Psoas muscle (tissue), 8 donors: ENCODE measurements at regions of chr4 and their contacts with region 1.

Region 1: GRCh38 chr4:139454111-139455045 is at the start of gene RAB33B:
- DNase-seq: no peak
- ATAC-seq: peak; percentile 5 to 26 (median 12)
- H3K4me3 ChIP-seq: peak within 1 kb of the TSS; percentile 87
- H3K27ac ChIP-seq: peak within 1 kb of the TSS; percentile 94
- H3K4me1 ChIP-seq: peaks cover 23% of the 10 kb centered on the region
- H3K27me3 ChIP-seq: no peaks in the 10 kb centered on the region
- CTCF ChIP-seq: no peak
- total RNA-seq, gene RAB33B: 3.4 to 4.0 (median 3.6) TPM

Region 2: DNA sequence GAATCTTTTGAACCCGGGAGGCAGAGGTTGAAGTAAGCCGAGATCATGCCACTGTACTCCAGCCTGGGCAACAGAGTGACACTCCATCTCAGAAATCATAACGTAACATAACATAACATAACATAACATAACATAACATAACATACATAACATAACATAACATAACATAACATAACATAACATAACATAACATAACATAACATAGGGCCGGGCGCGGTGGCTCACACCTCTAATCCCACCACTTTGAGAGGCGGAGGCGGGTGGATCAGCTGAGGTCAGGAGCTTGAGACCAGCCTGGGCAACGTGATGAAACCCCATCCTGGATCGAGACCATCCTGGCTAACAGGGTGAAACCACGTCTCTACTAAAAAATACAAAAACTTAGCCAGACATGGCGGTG is 362.1 kb before region 1 on chr4:
- intact Hi-C with region 1: no loop called
- DNase-seq: no peak
- ATAC-seq: no peak
- H3K4me3 ChIP-seq: no peak overlapping the region
- H3K27ac ChIP-seq: no peak overlapping the region
- H3K4me1 ChIP-seq: no peaks in the 10 kb centered on the region
- H3K27me3 ChIP-seq: no peaks in the 10 kb centered on the region
- CTCF ChIP-seq: no peak

Region 3: GRCh38 chr4:139509727-139510410 is 55.5 kb after region 1 on chr4:
- intact Hi-C with region 1: loop called in 1 of 2 experiments (anchors 5 kb)
- DNase-seq: no peak
- ATAC-seq: peak; percentile 54 to 69 (median 64)
- H3K4me3 ChIP-seq: no peak overlapping the region
- H3K27ac ChIP-seq: peak overlapping the region; percentile 48
- H3K4me1 ChIP-seq: peaks cover 48% of the 10 kb centered on the region
- H3K27me3 ChIP-seq: no peaks in the 10 kb centered on the region
- CTCF ChIP-seq: peak; percentile 47